ENCODE measurements at regions of chr7 and their contacts with region 1.

Region 1: DNA sequence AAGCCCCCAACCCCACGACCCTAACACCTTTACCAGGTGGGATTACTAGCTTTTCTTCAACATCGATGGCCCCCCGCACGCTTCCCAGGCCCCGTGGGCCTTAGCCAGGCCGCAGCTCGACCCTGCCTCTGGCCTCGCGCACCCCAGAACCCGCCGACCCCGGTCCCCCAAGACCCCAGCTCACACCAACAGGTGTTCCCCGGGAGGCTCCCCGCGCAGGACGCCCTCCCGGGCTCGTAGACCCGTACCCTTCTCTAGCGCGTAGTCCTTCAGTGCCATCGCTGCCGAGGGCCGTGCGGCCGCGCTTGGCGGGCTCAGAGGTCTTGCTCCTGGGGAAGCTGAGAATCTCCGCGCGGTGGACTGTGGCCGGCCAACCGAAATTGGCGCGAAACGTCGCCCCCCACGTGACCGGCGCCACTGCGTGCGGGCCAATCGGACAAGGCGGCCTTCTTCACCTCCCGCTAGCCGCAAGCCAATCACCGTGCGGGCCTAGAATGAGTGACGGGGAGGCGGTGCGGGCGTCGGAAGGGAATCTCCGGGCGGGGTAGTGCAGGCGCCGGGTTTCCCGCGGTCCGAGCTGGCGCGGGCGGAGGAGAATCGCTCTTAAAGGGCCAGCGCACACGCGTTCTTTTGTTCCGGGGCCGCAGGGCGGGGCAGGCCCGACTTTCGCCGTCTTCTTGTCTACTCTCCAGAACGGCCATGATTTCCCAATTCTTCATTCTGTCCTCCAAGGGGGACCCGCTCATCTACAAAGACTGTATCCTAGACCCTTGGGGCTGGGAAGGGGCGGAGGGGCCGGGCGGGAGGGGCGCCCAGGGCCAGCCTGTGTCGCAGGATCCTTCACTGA is at the starts of genes AP4M1 and MCM7:
- DNase-seq: peak; percentile 99
- H3K4me3 Mint-ChIP-seq: peak within 1 kb of the TSS; percentile 84
- H3K27ac Mint-ChIP-seq: peak within 1 kb of the TSS; percentile 90
- H3K4me1 Mint-ChIP-seq: peaks cover 42% of the 10 kb centered on the region
- H3K27me3 Mint-ChIP-seq: no peaks in the 10 kb centered on the region
- total RNA-seq, gene AP4M1: 10.6 to 15.2 TPM
- total RNA-seq, gene MCM7: 266 to 273 TPM

Region 2: GRCh38 chr7:99918959-99919813 is 182.1 kb before region 1 on chr7 and contains the start of gene TRIM4:
- CTCF ChIA-PET with region 1: no interaction called
- POLR2A ChIA-PET with region 1: interaction called, 20 read pairs
- DNase-seq: peak; percentile 93
- H3K4me3 Mint-ChIP-seq: peak within 1 kb of the TSS; percentile 96
- H3K27ac Mint-ChIP-seq: peak within 1 kb of the TSS; percentile 96
- H3K4me1 Mint-ChIP-seq: peaks cover 53% of the 10 kb centered on the region
- H3K27me3 Mint-ChIP-seq: no peaks in the 10 kb centered on the region
- total RNA-seq, gene TRIM4: 28.9 to 29.5 TPM

Region 3: DNA sequence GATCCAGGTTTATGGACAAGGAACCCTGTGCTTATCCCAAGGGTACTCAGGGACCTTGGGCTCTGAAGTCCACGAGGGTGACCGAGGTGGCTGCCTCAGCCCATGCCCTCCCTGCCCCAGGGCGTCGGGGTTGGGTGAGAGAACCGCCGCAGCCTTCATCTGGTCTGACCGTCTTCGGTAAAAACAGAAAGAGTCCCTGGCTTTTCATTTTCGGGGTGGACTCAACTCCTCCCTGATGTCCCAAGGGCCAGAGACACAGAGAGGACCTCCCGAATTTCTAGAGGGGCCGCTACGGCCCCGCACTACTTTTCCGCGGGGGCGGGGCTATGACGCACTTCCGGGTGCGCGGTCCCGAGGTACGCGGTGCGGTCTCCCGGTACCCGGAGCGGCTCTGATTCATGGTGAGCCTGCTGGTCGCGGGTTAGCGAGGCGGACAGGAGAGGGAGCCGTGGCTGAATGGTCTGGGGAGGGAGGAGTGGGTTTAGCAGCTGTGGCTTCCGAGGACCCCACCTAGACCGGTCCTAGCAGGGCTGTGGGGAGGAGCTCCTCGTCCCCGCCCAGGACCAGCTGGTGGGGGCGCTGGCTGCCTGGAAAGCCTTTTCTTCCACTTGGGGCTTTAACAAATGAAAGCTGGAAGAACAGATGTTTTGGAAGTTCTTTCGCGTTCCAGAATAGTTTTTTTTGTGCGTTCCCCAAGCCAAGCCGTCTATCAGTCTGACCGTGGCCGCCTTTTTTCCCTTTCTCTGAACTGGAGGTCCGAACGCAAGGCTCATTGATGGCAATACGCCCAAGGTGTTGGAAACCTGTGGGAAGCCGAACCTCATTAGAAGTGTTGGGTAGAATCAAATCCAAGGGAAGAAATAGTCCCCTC is 51.6 kb before region 1 on chr7 and contains the start of gene ZSCAN21:
- CTCF ChIA-PET with region 1: no interaction called
- POLR2A ChIA-PET with region 1: interaction called, 14 read pairs
- DNase-seq: peak; percentile 81
- H3K4me3 Mint-ChIP-seq: peak within 1 kb of the TSS; percentile 85
- H3K27ac Mint-ChIP-seq: peak within 1 kb of the TSS; percentile 80
- H3K4me1 Mint-ChIP-seq: peaks cover 17% of the 10 kb centered on the region
- H3K27me3 Mint-ChIP-seq: peaks cover 3% of the 10 kb centered on the region
- total RNA-seq, gene ZSCAN21: 6.9 TPM

Region 4: GRCh38 chr7:100111914-100112313 is 10.7 kb after region 1 on chr7:
- CTCF ChIA-PET with region 1: interaction called, 4 read pairs
- POLR2A ChIA-PET with region 1: interaction called, 32 read pairs
- DNase-seq: no peak
- H3K4me3 Mint-ChIP-seq: no peak overlapping the region
- H3K27ac Mint-ChIP-seq: no peak overlapping the region
- H3K4me1 Mint-ChIP-seq: peaks cover 2% of the 10 kb centered on the region
- H3K27me3 Mint-ChIP-seq: no peaks in the 10 kb centered on the region

Region 5: DNA sequence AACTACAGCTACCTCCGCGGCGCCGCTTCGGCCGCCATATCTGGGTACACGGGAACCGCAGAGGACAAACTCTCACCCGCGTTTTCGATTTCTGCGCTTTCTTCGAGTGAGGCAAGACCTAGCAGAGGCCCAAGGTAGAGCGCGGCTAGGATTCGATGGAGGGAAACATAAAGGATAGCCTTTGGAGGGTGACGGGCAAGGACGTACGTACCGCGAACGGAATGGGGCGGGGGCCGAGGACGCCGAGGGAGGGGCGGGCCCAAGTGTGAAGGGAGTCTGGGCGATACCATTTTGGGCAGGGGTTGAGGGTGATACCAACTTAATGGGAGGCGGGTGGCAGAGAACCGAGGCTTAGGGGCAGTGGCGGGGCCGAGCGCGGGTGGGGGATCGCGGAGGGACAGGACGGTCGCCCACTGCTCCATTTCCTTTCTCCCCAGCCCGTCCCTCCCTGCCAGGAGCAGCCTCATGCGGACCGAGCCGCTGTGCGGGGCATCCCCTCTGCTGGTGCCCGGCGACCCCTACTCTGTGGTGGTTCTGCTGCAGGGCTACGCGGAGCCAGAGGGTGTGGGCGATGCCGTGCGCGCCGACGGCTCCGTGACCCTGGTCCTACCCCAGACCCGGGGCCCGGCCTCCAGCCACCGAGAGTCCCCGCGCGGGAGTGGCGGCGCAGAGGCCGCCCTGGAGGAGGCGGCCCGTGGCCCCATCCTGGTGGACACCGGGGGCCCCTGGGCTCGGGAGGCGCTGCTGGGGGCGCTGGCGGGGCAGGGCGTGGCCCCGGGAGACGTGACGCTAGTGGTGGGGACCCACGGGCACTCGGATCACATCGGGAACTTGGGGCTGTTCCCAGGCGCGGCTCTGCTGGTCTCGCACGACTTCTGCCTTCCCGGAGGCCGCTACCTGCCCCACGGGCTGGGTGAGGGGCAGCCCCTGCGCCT is 26.0 kb after region 1 on chr7 and contains the start of gene MBLAC1:
- CTCF ChIA-PET with region 1: interaction called, 14 read pairs
- POLR2A ChIA-PET with region 1: interaction called, 81 read pairs
- DNase-seq: peak; percentile 92
- H3K4me3 Mint-ChIP-seq: peak within 1 kb of the TSS; percentile 100
- H3K27ac Mint-ChIP-seq: peak within 1 kb of the TSS; percentile 100
- H3K4me1 Mint-ChIP-seq: peaks cover 37% of the 10 kb centered on the region
- H3K27me3 Mint-ChIP-seq: no peaks in the 10 kb centered on the region
- total RNA-seq, gene MBLAC1: 3.4 to 4.1 TPM

Measured in activated CD4-positive, alpha-beta memory T cell treated with anti-CD3 and anti-CD28 coated beads, Interleukin-2, amount 10 ng/mL, durations not matched to agents 7 days and 5 days (primary cell).